Activated B cell treated with CpG ODN at 0.5 μM for 24 hours (primary cell): ENCODE measurements at regions of chr13 and their contacts with region 1.

Region 1: DNA sequence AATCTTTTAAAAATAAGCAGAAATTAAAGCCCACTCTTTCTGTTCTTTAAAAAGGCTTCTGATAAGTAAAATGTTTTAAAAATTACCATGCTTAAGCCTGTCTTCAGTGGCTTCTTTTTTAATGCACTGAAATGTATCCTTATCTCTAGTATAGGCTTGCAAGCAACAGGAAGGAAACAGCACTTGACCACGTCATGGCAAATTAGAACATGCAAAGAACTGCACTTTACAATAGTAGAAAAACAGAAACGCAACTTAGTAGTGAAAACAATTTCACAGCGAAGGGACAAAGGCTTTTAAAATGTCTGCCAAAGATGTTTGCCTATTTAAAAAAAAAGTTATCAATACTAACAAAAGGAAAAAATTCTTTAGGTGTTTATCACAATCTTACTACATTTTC is 36.3 kb downstream of the ELF1 start:
- DNase-seq: no peak
- ATAC-seq: peak; percentile 64
- H3K4me3 Mint-ChIP-seq: peak overlapping the region; percentile 87
- H3K27ac Mint-ChIP-seq: peak overlapping the region; percentile 86
- H3K4me1 Mint-ChIP-seq: peaks cover 80% of the 10 kb centered on the region
- H3K27me3 Mint-ChIP-seq: no peaks in the 10 kb centered on the region
- CTCF ChIP-seq: no peak

Region 2: GRCh38 chr13:40940841-40941240 is 41.9 kb before region 1 on chr13:
- CTCF ChIA-PET with region 1: no interaction called
- POLR2A ChIA-PET with region 1: no interaction called
- intact Hi-C with region 1: no loop called
- DNase-seq: no peak
- ATAC-seq: no peak
- H3K4me3 Mint-ChIP-seq: no peak overlapping the region
- H3K27ac Mint-ChIP-seq: no peak overlapping the region
- H3K4me1 Mint-ChIP-seq: peaks cover 12% of the 10 kb centered on the region
- H3K27me3 Mint-ChIP-seq: no peaks in the 10 kb centered on the region
- CTCF ChIP-seq: no peak

Region 3: GRCh38 chr13:40969169-40969901 is 13.4 kb before region 1 on chr13:
- CTCF ChIA-PET with region 1: interaction called, 7 read pairs
- POLR2A ChIA-PET with region 1: interaction called, 3 read pairs
- intact Hi-C with region 1: loop called (anchors 1 kb)
- DNase-seq: no peak
- ATAC-seq: peak; percentile 72
- H3K4me3 Mint-ChIP-seq: peak overlapping the region; percentile 54
- H3K27ac Mint-ChIP-seq: peak overlapping the region; percentile 76
- H3K4me1 Mint-ChIP-seq: peaks cover 99% of the 10 kb centered on the region
- H3K27me3 Mint-ChIP-seq: no peaks in the 10 kb centered on the region
- CTCF ChIP-seq: no peak

Region 4: GRCh38 chr13:40992678-40993518 is 10.1 kb after region 1 on chr13:
- CTCF ChIA-PET with region 1: interaction called, 3 read pairs
- POLR2A ChIA-PET with region 1: interaction called, 5 read pairs
- intact Hi-C with region 1: loop called (anchors 1 kb)
- DNase-seq: no peak
- ATAC-seq: no peak
- H3K4me3 Mint-ChIP-seq: no peak overlapping the region
- H3K27ac Mint-ChIP-seq: peak overlapping the region; percentile 60
- H3K4me1 Mint-ChIP-seq: peaks cover 84% of the 10 kb centered on the region
- H3K27me3 Mint-ChIP-seq: no peaks in the 10 kb centered on the region
- CTCF ChIP-seq: no peak

Region 5: DNA sequence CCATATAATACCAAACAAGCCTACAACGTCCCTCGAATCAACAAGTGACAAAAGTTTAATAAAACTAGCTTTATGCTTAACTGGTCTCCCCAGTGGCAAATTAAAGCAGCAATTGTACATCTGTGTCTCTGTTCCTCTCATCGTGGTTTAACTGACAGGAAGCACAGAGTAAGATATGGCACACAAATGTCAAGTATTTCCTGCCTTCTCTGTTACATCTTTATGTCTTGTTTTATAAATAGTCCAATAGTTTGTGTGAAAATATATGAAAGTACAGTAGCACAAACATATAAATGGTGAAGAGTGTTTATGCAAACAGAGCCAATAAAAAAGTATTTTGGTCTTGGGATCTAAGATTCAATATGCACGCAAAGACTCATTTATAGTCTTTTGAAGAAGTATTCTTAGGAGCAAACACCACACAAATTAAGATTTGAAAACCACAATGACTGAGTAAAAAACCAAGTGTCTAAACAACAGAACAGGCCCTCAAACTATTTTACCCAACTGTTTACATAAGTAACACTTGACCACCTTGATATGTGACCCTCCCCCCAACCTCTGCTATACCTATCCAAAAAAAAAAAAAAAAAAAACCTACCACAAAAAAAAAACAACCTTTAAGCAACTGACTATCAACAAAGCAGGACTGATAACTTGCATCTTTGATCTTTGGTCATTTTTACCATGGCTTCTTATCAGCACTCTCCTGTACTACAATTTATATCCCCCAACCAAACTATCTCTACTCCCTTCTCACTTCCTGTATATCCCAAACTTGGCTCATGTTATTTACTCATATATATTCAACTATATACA is 22.3 kb after region 1 on chr13:
- CTCF ChIA-PET with region 1: no interaction called
- POLR2A ChIA-PET with region 1: interaction called, 5 read pairs
- intact Hi-C with region 1: loop called (anchors 1 kb)
- DNase-seq: no peak
- ATAC-seq: peak; percentile 81
- H3K4me3 Mint-ChIP-seq: peak overlapping the region; percentile 12
- H3K27ac Mint-ChIP-seq: peak overlapping the region; percentile 71
- H3K4me1 Mint-ChIP-seq: peaks cover 75% of the 10 kb centered on the region
- H3K27me3 Mint-ChIP-seq: no peaks in the 10 kb centered on the region
- CTCF ChIP-seq: no peak

Region 6: GRCh38 chr13:41019011-41019487 is 36.3 kb after region 1 on chr13 and contains the start of gene ELF1:
- CTCF ChIA-PET with region 1: interaction called, 3 read pairs
- POLR2A ChIA-PET with region 1: interaction called, 9 read pairs
- intact Hi-C with region 1: loop called (anchors 1 kb)
- DNase-seq: peak; percentile 26
- ATAC-seq: peak; percentile 87
- H3K4me3 Mint-ChIP-seq: peak within 1 kb of the TSS; percentile 94
- H3K27ac Mint-ChIP-seq: peak within 1 kb of the TSS; percentile 99
- H3K4me1 Mint-ChIP-seq: peaks cover 46% of the 10 kb centered on the region
- H3K27me3 Mint-ChIP-seq: no peaks in the 10 kb centered on the region
- CTCF ChIP-seq: no peak
- total RNA-seq, gene ELF1: 129 and 136 TPM in 2 replicates

Region 7: DNA sequence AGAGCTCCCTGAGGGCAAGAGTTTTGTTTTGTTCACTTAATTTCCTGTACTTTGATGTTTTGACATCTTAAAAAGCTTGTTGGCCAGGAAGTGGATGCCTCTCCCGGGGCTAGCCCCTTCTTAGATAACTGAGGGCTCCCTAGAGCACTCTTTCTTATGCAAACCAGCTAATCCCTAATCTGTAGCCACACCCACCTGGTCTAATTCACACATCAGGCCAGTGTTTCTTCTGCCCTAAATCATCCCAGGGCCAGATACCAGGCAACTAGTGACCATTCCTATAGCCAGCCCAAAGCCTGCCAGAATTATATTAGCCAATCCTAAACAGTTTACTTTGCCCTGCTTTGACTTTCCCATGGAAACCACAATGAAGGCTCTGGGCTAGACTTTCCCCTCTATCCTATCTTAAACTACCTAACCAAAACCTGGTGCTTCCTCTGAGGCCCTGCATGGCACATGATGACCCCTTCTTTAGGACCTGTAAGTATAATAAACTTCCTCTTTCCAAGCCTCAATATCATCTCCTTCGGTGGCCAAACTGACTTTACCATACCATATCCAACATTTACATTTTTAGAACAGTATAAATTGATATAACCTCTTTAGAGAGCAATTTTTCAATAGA is 103.3 kb after region 1 on chr13:
- CTCF ChIA-PET with region 1: no interaction called
- POLR2A ChIA-PET with region 1: no interaction called
- intact Hi-C with region 1: no loop called
- DNase-seq: no peak
- ATAC-seq: peak; percentile 25
- H3K4me3 Mint-ChIP-seq: no peak overlapping the region
- H3K27ac Mint-ChIP-seq: no peak overlapping the region
- H3K4me1 Mint-ChIP-seq: peaks cover 10% of the 10 kb centered on the region
- H3K27me3 Mint-ChIP-seq: no peaks in the 10 kb centered on the region
- CTCF ChIP-seq: no peak

Region 8: GRCh38 chr13:41132512-41133152 is 149.9 kb after region 1 on chr13 and contains the start of gene KBTBD6:
- CTCF ChIA-PET with region 1: no interaction called
- POLR2A ChIA-PET with region 1: no interaction called
- intact Hi-C with region 1: loop called (anchors 2 kb)
- DNase-seq: peak; percentile 83
- ATAC-seq: peak; percentile 97
- H3K4me3 Mint-ChIP-seq: peak within 1 kb of the TSS; percentile 98
- H3K27ac Mint-ChIP-seq: peak within 1 kb of the TSS; percentile 91
- H3K4me1 Mint-ChIP-seq: peaks cover 47% of the 10 kb centered on the region
- H3K27me3 Mint-ChIP-seq: no peaks in the 10 kb centered on the region
- CTCF ChIP-seq: no peak
- total RNA-seq, gene KBTBD6: 5.1 and 6.0 TPM in 2 replicates

Region 9: GRCh38 chr13:41199526-41199925 is 216.8 kb after region 1 on chr13:
- CTCF ChIA-PET with region 1: no interaction called
- POLR2A ChIA-PET with region 1: no interaction called
- intact Hi-C with region 1: loop called (anchors 2 kb)
- DNase-seq: no peak
- ATAC-seq: peak; percentile 90
- H3K4me3 Mint-ChIP-seq: peak overlapping the region; percentile 55
- H3K27ac Mint-ChIP-seq: peak overlapping the region; percentile 87
- H3K4me1 Mint-ChIP-seq: peaks cover 47% of the 10 kb centered on the region
- H3K27me3 Mint-ChIP-seq: no peaks in the 10 kb centered on the region
- CTCF ChIP-seq: no peak

Region 10: GRCh38 chr13:41244556-41244955 is 261.8 kb after region 1 on chr13:
- CTCF ChIA-PET with region 1: no interaction called
- POLR2A ChIA-PET with region 1: no interaction called
- intact Hi-C with region 1: no loop called
- DNase-seq: no peak
- ATAC-seq: no peak
- H3K4me3 Mint-ChIP-seq: no peak overlapping the region
- H3K27ac Mint-ChIP-seq: no peak overlapping the region
- H3K4me1 Mint-ChIP-seq: no peaks in the 10 kb centered on the region
- H3K27me3 Mint-ChIP-seq: no peaks in the 10 kb centered on the region
- CTCF ChIP-seq: no peak